Ovary (tissue), 10 donors: ENCODE measurements at regions of chr3 and their contacts with region 1.

Region 1: DNA sequence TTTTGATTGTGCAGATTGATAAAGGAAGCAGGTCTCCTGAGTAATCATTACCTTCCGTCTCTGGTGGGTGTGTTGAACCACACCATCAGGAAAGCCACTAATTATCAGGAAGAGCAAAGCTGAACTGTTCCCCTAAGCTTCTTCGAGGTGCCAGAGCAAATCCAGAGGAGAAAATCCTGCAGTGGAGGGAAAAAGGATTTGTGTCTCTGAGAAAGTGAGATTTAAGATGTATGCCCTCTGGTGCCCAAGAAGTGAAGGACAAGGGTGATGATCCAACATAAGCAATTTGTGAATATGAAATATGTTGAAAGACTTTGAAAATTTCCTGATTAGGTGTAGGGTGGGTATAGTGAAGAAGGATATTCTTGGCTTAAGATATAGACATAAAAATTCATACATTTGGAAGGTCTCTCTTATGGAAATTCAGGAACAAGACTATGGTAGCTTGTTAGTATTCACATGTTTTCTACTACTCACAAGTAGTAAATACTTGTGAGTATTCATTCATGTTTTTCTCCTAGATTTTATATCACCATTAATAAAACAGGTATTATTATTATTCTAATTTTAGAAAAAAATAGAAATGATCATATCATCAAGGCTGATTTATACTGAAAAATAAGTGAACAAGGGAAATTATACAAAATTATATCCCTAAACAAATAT is 34.8 kb downstream of the COMMD2 start:
- DNase-seq: peak in 4 of 5 donors; percentile 42 to 80 (median 50)
- H3K4me3 ChIP-seq: no peak overlapping the region
- H3K27ac ChIP-seq: peak overlapping the region in 1 of 2 donors; percentile 13
- H3K4me1 ChIP-seq: peaks cover 3% of the 10 kb centered on the region
- H3K27me3 ChIP-seq: no peaks in the 10 kb centered on the region
- CTCF ChIP-seq: peak; percentile 77 to 82 (median 79)
- EP300 ChIP-seq: no peak
- POLR2A ChIP-seq: no peak

Region 2: DNA sequence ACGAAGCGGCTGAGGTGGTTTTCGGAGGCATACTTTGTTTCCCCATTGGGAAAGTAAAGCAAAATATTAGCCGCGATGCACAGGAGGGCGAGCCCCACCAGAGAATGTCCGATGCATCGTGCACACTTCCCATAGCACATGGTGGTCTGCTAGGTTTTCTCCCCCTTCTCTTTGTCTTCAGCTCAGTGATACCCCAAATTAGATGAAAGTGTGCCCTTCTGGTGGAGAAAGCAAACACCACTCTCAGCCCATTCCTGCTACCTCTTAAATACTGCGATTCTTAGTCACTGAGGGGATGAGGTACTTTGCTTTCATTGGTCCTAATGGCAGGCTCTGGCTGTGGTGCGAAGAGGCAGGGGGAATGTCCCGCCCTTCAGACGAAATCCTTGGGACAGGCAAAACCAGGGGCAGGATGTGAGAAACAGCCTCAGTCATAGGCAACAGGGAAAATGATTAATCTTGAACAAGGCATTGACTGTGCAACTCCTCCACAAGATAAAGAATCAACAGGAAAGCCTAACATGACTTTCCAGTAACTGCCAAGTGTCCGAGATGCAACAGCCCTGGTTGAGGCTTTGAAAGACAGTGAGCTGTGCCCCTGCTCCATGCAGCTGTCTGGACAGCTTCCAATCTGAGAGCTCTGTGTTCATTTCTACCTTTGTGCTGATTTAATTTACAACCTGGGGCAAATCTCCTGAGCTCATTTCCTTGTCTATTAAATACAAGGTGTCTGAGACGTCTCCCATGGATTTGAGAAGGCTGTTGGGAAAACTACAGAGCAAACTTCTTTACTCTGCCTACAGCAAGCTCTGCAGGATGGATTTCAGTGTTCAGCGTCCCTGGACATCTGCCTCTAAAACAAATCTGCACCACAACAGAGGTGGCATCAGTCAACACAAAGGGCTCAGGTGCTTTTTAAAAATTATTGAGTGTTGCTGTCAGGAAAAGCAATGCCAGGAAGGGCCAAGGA is 339.8 kb before region 1 on chr3 and contains the start of gene TM4SF1:
- intact Hi-C with region 1: no loop called
- DNase-seq: peak; percentile 45 to 66 (median 51)
- H3K4me3 ChIP-seq: peak within 1 kb of the TSS; percentile 31
- H3K27ac ChIP-seq: peak within 1 kb of the TSS; percentile 36 to 41
- H3K4me1 ChIP-seq: peaks cover 8% of the 10 kb centered on the region
- H3K27me3 ChIP-seq: no peaks in the 10 kb centered on the region
- CTCF ChIP-seq: no peak
- EP300 ChIP-seq: no peak
- POLR2A ChIP-seq: no peak
- total RNA-seq, gene TM4SF1: 35.6 to 207 (median 54.9) TPM

Region 3: GRCh38 chr3:149512209-149512782 is 205.2 kb before region 1 on chr3:
- intact Hi-C with region 1: loop called in 3 of 4 experiments (anchors 1 to 10 kb)
- DNase-seq: peak; percentile 37 to 77 (median 62)
- H3K4me3 ChIP-seq: no peak overlapping the region
- H3K27ac ChIP-seq: no peak overlapping the region
- H3K4me1 ChIP-seq: peaks cover 5% of the 10 kb centered on the region
- H3K27me3 ChIP-seq: no peaks in the 10 kb centered on the region
- CTCF ChIP-seq: peak; percentile 63 to 80 (median 74)
- EP300 ChIP-seq: no peak
- POLR2A ChIP-seq: no peak

Region 4: GRCh38 chr3:149527531-149528339 is 189.8 kb before region 1 on chr3:
- intact Hi-C with region 1: loop called in 1 of 4 experiments (anchors 1 kb)
- DNase-seq: peak in 1 of 5 donors; percentile 16
- H3K4me3 ChIP-seq: no peak overlapping the region
- H3K27ac ChIP-seq: peak overlapping the region in 1 of 2 donors; percentile 0
- H3K4me1 ChIP-seq: peaks cover 11% of the 10 kb centered on the region
- H3K27me3 ChIP-seq: no peaks in the 10 kb centered on the region
- CTCF ChIP-seq: no peak
- EP300 ChIP-seq: no peak
- POLR2A ChIP-seq: no peak

Region 5: DNA sequence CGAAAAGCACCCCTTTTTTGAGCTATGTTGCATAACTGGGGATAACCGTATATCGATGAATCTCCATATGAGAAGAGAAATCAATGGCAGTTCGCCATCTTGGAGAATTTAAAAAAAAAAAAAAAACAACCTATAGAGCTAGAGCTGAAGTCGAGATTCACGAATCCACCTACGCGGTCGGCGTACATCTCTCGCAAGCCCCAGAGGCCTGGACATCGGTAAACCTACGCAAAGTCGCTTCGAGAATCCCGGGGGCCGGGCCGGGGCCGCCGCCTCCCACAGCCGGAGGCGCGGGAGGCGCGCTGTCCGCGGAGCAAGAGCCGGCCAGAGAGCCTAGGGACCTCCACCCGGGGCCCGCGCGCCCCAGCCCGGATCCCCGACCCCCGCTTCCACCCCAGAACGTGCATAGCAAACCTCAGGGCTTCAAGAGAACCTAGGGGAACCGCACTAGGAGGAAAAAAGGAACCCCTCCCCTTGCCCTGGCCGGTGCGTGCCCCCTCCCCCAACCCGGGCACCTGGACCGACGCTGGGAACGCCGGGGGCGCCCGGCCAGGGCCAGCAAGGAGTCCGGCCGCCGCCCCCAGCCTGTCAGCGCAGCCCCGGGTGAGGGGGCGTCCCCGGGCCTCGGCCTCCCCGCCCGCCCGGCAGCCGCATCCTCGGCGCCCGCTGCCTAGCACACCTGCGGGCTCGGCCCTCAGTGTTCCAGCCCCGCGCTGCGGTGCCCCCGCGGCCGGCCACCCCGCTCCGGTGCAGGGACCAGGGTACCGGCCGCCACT is 252.6 kb after region 1 on chr3:
- intact Hi-C with region 1: no loop called
- DNase-seq: peak; percentile 84 to 92 (median 90)
- H3K4me3 ChIP-seq: peak overlapping the region; percentile 57
- H3K27ac ChIP-seq: peak overlapping the region; percentile 94 to 95
- H3K4me1 ChIP-seq: peaks cover 3% of the 10 kb centered on the region
- H3K27me3 ChIP-seq: no peaks in the 10 kb centered on the region
- CTCF ChIP-seq: no peak
- EP300 ChIP-seq: no peak
- POLR2A ChIP-seq: no peak